Activated CD4-positive, alpha-beta T cell treated with anti-CD3 and anti-CD28 coated beads, Interleukin-2, amount 10 ng/mL, durations not matched to agents 24 days and 14 days (primary cell): ENCODE measurements at regions of chr2 and their contacts with region 1.

Region 1: DNA sequence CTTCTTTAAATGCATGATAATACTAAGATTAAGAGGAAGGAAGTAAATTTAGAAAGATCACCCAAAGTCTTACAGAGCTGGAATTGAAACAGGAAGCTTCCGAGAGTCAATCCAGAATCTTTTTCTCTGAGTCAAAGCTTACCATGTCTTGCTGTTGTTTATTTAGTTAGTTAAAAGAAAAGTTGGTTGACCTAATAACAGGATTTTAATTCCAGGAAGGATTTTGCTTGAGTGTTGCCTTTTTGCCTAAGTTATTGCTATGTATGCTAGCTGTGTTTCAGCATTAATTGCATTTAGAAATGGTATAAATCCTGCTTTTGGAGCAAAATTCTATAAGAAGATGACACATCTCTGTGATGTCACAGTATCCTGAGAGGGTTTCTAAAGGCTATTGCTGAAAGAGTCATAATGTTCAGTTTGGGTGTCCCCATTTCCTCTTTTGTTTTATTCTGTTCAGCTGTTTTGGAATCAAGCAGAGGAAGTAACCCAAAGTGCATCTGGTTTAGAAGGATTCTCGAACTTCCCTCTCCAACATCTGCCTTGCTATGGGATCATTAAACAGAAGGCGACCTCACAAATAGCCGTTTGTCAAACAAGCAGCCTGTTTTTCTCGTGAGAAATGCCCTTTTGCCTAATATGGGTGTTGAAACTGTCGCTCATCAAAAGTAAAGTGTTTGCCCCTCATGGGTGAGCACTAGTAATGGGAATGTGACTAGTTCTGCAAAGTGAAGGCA is 271.5 kb upstream of the MMADHC start:
- DNase-seq: no peak
- H3K4me3 Mint-ChIP-seq: no peak overlapping the region
- H3K27ac Mint-ChIP-seq: no peak overlapping the region
- H3K4me1 Mint-ChIP-seq: no peaks in the 10 kb centered on the region
- H3K27me3 Mint-ChIP-seq: no peaks in the 10 kb centered on the region

Region 2: DNA sequence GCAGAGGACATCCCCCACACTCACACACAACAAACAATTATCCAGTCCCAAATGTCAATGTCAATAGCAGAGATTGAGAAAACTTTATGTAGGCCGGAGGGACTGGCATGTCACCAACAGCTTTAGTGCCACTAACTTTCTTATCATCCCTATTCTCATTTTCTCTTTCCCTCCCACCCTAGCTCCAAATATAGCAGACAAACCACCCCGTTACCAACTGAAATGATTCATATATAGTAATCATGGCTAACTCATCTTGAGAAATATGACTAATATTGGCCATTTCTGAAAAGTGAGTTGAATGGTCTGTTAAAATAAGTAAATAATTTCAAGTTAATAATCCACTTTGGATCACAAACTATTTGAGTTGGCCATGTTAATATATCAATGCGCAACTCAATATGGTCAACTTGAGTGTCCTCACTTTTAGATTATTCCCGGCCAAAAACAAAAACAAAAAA is 870.5 kb after region 1 on chr2:
- intact Hi-C with region 1: loop called (anchors 10 kb)
- DNase-seq: no peak
- H3K4me3 Mint-ChIP-seq: no peak overlapping the region
- H3K27ac Mint-ChIP-seq: no peak overlapping the region
- H3K4me1 Mint-ChIP-seq: no peaks in the 10 kb centered on the region
- H3K27me3 Mint-ChIP-seq: no peaks in the 10 kb centered on the region